Activated B cell treated with CpG ODN at 0.5 μM for 24 hours (primary cell): ENCODE measurements at regions of chr22 and their contacts with region 1.

Region 1: DNA sequence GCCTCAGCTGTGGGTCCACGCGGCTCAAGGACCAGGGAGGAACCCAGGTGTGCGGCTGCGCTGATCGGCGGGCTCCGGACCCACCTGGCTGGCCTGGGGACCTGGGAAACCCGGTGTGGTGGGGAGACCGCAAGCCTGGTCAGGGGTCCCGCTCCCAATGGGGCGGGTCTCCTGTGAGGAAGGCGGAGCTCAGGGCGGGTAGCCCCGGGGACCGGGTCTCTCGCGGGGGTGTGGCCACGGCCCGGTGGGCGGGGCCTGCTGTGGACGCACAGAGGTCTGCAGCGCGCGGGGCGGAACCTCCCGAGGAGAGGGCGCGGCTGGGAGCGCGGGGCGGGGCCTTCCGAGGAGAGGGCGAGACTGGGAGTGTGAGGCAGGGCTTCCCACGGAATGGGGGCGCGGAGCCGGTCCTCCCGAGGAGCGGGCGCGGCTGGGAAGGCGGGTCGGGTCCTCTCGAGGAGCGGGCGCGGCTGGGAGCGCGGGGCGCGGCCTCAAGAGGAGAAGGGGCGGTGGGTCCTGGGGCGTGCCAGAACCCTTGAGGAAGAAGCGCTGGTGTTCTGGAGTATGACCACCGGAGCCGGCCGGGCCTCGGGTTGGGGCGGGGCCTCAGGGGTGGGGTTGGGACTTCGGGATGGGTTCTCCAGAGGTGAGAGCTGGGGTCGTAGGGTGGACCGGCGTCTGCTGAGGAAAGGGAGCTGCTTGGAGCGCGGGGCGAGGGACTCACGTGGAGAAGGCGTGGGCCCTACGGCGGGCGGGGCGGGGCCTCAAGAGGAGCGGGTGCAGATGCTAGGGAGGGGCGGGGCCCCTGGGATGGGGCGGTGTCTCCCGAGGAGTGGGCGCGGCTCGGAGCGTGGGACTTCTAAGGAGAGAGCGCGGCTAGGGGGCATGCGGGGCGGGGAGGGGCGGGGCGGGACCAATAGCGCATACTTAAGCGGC is 20.8 kb downstream of the DGCR6L start:
- DNase-seq: peak; percentile 89
- ATAC-seq: peak; percentile 90
- H3K4me3 Mint-ChIP-seq: peak overlapping the region; percentile 86
- H3K27ac Mint-ChIP-seq: no peak overlapping the region
- H3K4me1 Mint-ChIP-seq: no peaks in the 10 kb centered on the region
- H3K27me3 Mint-ChIP-seq: peaks cover 7% of the 10 kb centered on the region
- CTCF ChIP-seq: no peak

Region 2: DNA sequence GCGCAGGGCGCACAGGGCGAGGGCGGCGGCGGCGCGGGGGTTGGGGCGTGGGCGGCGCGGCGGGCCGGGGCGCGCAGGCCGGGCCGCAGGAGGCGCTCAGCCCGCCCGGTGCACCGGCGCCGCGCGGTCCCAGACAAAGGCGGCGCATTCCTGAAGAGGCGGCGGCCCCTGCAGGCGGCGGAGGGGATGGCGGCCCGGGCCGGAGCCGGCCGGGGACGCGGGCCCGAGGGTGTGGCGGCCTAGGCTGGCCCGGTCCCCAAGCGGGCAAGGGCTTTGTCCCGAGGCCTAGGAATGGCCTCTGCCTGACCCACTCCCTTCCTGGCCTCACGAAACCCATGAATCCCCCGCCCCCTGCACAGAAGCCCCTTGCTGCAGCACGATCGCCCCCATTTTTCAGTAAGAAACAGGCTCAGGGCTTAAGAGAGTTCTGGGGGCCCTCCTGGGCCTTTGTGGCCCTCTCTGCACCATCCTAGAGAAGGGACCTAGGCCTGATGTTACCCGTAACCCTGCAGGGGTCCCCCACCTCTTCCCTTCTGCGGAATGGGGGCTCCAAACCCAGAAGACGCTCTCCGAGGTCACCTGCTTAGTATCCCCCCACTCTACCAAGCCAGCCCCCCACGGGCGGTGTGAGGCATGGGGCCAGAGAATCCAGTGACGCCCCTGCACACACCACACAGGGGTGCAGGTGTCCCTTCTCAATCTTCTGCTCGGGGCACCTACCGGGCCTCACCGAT is 30.6 kb before region 1 on chr22 and contains the start of gene RTN4R:
- CTCF ChIA-PET with region 1: no interaction called
- POLR2A ChIA-PET with region 1: no interaction called
- intact Hi-C with region 1: loop called (anchors 1 kb)
- DNase-seq: peak; percentile 64
- ATAC-seq: peak; percentile 95
- H3K4me3 Mint-ChIP-seq: peak within 1 kb of the TSS; percentile 65
- H3K27ac Mint-ChIP-seq: no peak within 1 kb of the TSS
- H3K4me1 Mint-ChIP-seq: peaks cover 7% of the 10 kb centered on the region
- H3K27me3 Mint-ChIP-seq: peaks cover 8% of the 10 kb centered on the region
- CTCF ChIP-seq: no peak
- total RNA-seq, gene RTN4R: 0.12 TPM in 1 of 2 replicates, not detected in the other

Region 3: GRCh38 chr22:20319745-20320658 is 20.9 kb after region 1 on chr22 and contains the start of gene DGCR6L:
- CTCF ChIA-PET with region 1: no interaction called
- POLR2A ChIA-PET with region 1: interaction called, 3 read pairs
- intact Hi-C with region 1: loop called (anchors 2 kb)
- DNase-seq: peak; percentile 97
- ATAC-seq: peak; percentile 90
- H3K4me3 Mint-ChIP-seq: peak within 1 kb of the TSS; percentile 89
- H3K27ac Mint-ChIP-seq: peak within 1 kb of the TSS; percentile 65
- H3K4me1 Mint-ChIP-seq: peaks cover 30% of the 10 kb centered on the region
- H3K27me3 Mint-ChIP-seq: no peaks in the 10 kb centered on the region
- CTCF ChIP-seq: no peak
- total RNA-seq, gene DGCR6L: 12.4 and 16.2 TPM in 2 replicates